Naive thymus-derived CD4-positive, alpha-beta T cell (primary cell): ENCODE measurements at regions of chrX and their contacts with region 1.

Region 1: GRCh38 chrX:57286507-57287251 is at the start of gene FAAH2:
- DNase-seq: peak; percentile 7 to 88 (median 66)
- ATAC-seq: peak; percentile 91
- H3K4me3 ChIP-seq: peak within 1 kb of the TSS; percentile 82
- H3K4me3 Mint-ChIP-seq: peak within 1 kb of the TSS; percentile 82 to 95 (median 92)
- H3K27ac ChIP-seq: peak within 1 kb of the TSS; percentile 88
- H3K27ac Mint-ChIP-seq: peak within 1 kb of the TSS; percentile 57 to 96 (median 95)
- H3K4me1 ChIP-seq: peaks cover 0 to 3% of the 10 kb centered on the region in 2 donors
- H3K4me1 Mint-ChIP-seq: peaks cover 5 to 57% (median 43%) of the 10 kb centered on the region in 7 donors
- H3K27me3 ChIP-seq: no peaks in the 10 kb centered on the region
- H3K27me3 Mint-ChIP-seq: no peaks in the 10 kb centered on the region
- total RNA-seq, gene FAAH2: 7.5 to 12.6 (median 9.7) TPM

Region 2: DNA sequence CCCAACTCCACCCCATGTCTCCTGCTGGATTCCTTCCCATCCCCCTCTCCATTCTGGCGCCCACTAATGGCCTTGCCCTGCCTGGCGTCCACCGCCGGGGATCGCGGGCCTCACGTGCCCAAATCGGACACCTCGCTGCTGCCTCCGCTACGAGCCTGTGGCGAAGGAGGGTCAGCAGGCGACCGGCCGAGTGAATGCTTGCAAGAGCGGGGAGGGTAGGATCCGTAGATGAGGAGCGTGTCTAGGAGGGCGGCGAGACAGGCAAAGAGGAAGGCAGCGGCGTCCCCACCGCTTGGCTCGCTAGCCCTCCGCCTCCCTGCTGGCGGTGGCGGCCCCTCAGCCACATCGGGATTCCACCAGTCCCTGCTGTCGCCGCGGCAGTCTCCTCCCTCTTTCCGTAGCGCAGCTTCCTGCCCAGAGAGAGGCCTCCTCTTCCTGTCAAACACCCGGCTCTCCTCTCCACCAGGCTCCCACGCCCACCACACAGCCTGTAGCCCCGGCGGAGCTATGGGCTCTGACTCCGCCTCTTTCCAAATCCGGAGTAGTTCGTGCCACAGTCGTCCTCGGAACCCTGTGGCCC is 165.4 kb before region 1 on chrX and contains the start of gene SPIN2B:
- CTCF ChIA-PET with region 1: no interaction called
- POLR2A ChIA-PET with region 1: no interaction called
- intact Hi-C with region 1: loop called (anchors 1 to 10 kb)
- DNase-seq: peak; percentile 27 to 76 (median 68)
- ATAC-seq: peak; percentile 99
- H3K4me3 ChIP-seq: peak within 1 kb of the TSS; percentile 57
- H3K4me3 Mint-ChIP-seq: peak within 1 kb of the TSS; percentile 90 to 95 (median 93)
- H3K27ac ChIP-seq: peak within 1 kb of the TSS; percentile 62
- H3K27ac Mint-ChIP-seq: peak within 1 kb of the TSS; percentile 72 to 96 (median 91)
- H3K4me1 ChIP-seq: no peaks in the 10 kb centered on the region
- H3K4me1 Mint-ChIP-seq: peaks cover 5 to 14% (median 11%) of the 10 kb centered on the region in 7 donors
- H3K27me3 ChIP-seq: no peaks in the 10 kb centered on the region
- H3K27me3 Mint-ChIP-seq: no peaks in the 10 kb centered on the region
- total RNA-seq, gene SPIN2B: 9.0 to 19.7 (median 14.0) TPM

Region 3: DNA sequence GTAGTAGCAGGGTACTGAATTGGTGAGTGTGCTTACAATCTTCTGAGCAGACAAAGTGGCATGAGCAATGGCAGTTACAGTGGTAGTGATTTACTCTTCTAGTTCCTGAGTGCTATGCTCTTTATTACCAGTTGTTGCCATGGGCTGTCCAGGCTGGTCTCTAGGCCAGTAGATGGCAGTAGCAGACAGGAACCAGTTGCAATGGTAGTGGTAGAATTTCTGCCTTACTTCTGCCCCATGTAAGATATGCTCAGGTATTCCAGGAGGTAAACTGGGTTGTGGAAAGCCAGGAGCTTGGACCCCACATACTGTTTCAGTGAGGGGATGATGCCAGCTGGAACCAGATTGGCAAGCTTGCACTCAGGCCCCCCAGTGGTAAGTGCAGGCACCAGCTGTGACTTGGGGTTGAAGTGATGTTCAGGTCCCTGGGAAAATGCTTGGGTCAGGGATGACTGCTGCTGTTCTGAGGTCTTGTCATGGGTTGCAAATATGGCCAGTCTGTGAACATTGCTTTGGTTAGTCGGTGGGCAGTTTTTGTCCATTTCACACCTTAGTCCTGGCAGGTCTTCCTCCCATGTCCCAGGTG is 242.1 kb after region 1 on chrX:
- CTCF ChIA-PET with region 1: no interaction called
- POLR2A ChIA-PET with region 1: no interaction called
- intact Hi-C with region 1: loop called in 1 of 2 experiments (anchors 2 kb)
- DNase-seq: peak in 5 of 9 donors; percentile 0 to 19 (median 7)
- ATAC-seq: no peak
- H3K4me3 ChIP-seq: no peak overlapping the region
- H3K4me3 Mint-ChIP-seq: no peak overlapping the region
- H3K27ac ChIP-seq: no peak overlapping the region
- H3K27ac Mint-ChIP-seq: no peak overlapping the region
- H3K4me1 ChIP-seq: no peaks in the 10 kb centered on the region
- H3K4me1 Mint-ChIP-seq: no peaks in the 10 kb centered on the region
- H3K27me3 ChIP-seq: no peaks in the 10 kb centered on the region
- H3K27me3 Mint-ChIP-seq: no peaks in the 10 kb centered on the region

Region 4: GRCh38 chrX:57906790-57907189 is 620.1 kb after region 1 on chrX:
- CTCF ChIA-PET with region 1: no interaction called
- POLR2A ChIA-PET with region 1: no interaction called
- intact Hi-C with region 1: loop called (anchors 2 to 5 kb)
- DNase-seq: no peak
- ATAC-seq: no peak
- H3K4me3 ChIP-seq: no peak overlapping the region
- H3K4me3 Mint-ChIP-seq: peak overlapping the region in 8 of 10 donors; percentile 5 to 80 (median 57)
- H3K27ac ChIP-seq: no peak overlapping the region
- H3K27ac Mint-ChIP-seq: peak overlapping the region in 3 of 9 donors; percentile 42 to 65 (median 64)
- H3K4me1 ChIP-seq: peaks cover 5 to 6% of the 10 kb centered on the region in 2 donors
- H3K4me1 Mint-ChIP-seq: peaks cover 7 to 47% (median 36%) of the 10 kb centered on the region in 7 donors
- H3K27me3 ChIP-seq: no peaks in the 10 kb centered on the region
- H3K27me3 Mint-ChIP-seq: no peaks in the 10 kb centered on the region

Region 5: GRCh38 chrX:58025979-58026378 is 739.3 kb after region 1 on chrX:
- CTCF ChIA-PET with region 1: no interaction called
- POLR2A ChIA-PET with region 1: no interaction called
- intact Hi-C with region 1: loop called in 1 of 2 experiments (anchors 10 kb)
- DNase-seq: peak in 6 of 9 donors; percentile 4 to 43 (median 30)
- ATAC-seq: no peak
- H3K4me3 ChIP-seq: no peak overlapping the region
- H3K4me3 Mint-ChIP-seq: no peak overlapping the region
- H3K27ac ChIP-seq: no peak overlapping the region
- H3K27ac Mint-ChIP-seq: no peak overlapping the region
- H3K4me1 ChIP-seq: peaks cover 0 to 7% of the 10 kb centered on the region in 2 donors
- H3K4me1 Mint-ChIP-seq: peaks cover 0 to 34% (median 8%) of the 10 kb centered on the region in 7 donors
- H3K27me3 ChIP-seq: no peaks in the 10 kb centered on the region
- H3K27me3 Mint-ChIP-seq: no peaks in the 10 kb centered on the region